Naive thymus-derived CD4-positive, alpha-beta T cell (primary cell): ENCODE measurements at regions of chr5 and their contacts with region 1.

Region 1: DNA sequence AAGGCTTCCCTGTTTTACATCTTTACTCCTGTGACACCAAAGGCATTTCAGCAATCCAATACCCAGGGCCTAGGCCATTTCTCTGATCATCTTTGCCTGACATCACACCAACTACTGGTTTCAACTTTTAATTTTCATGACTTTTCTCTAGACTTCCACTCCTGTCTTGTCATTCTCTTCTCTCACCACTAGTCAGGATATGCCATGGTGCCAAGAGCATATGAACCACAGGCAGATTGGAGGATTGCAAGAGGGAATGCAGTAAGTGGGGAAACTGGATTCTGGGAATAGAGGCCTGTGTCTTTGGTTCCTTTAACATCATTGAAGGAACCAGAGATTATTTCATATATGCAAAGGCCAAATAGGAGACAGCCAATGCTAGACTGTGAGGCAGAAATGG is 69.3 kb downstream of the ANKRD31 start:
- DNase-seq: peak in 1 of 9 donors; percentile 12
- ATAC-seq: no peak
- H3K4me3 ChIP-seq: no peak overlapping the region
- H3K4me3 Mint-ChIP-seq: no peak overlapping the region
- H3K27ac ChIP-seq: no peak overlapping the region
- H3K27ac Mint-ChIP-seq: no peak overlapping the region
- H3K4me1 ChIP-seq: no peaks in the 10 kb centered on the region
- H3K4me1 Mint-ChIP-seq: no peaks in the 10 kb centered on the region
- H3K27me3 ChIP-seq: no peaks in the 10 kb centered on the region
- H3K27me3 Mint-ChIP-seq: no peaks in the 10 kb centered on the region

Region 2: DNA sequence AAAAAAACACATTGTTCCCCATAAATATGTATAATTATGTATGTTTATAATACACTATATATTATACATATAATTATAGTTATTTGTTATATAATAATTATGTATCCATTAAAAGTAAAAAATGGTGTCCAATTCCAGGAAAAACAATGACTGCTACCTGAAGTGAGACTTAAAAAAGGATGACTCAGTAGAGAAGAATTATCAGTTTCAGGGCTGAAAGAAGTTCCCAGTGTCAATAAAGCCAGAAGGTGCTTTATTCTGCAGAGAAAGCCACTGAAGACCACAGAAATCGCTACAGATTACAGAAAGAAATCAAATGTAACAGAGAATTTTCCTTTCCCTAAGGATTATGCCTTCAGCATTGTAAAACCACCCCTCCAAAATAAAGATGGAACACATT is 18.4 kb after region 1 on chr5:
- CTCF ChIA-PET with region 1: no interaction called
- POLR2A ChIA-PET with region 1: no interaction called
- intact Hi-C with region 1: loop called in 1 of 2 experiments (anchors 2 kb)
- DNase-seq: no peak
- ATAC-seq: no peak
- H3K4me3 ChIP-seq: no peak overlapping the region
- H3K4me3 Mint-ChIP-seq: no peak overlapping the region
- H3K27ac ChIP-seq: no peak overlapping the region
- H3K27ac Mint-ChIP-seq: no peak overlapping the region
- H3K4me1 ChIP-seq: no peaks in the 10 kb centered on the region
- H3K4me1 Mint-ChIP-seq: peaks cover 0 to 9% (median 6%) of the 10 kb centered on the region in 7 donors
- H3K27me3 ChIP-seq: no peaks in the 10 kb centered on the region
- H3K27me3 Mint-ChIP-seq: no peaks in the 10 kb centered on the region

Region 3: GRCh38 chr5:75862872-75863271 is 695.5 kb after region 1 on chr5:
- CTCF ChIA-PET with region 1: no interaction called
- POLR2A ChIA-PET with region 1: no interaction called
- intact Hi-C with region 1: no loop called
- DNase-seq: no peak
- ATAC-seq: no peak
- H3K4me3 ChIP-seq: no peak overlapping the region
- H3K4me3 Mint-ChIP-seq: no peak overlapping the region
- H3K27ac ChIP-seq: no peak overlapping the region
- H3K27ac Mint-ChIP-seq: no peak overlapping the region
- H3K4me1 ChIP-seq: no peaks in the 10 kb centered on the region
- H3K4me1 Mint-ChIP-seq: no peaks in the 10 kb centered on the region
- H3K27me3 ChIP-seq: no peaks in the 10 kb centered on the region
- H3K27me3 Mint-ChIP-seq: peaks cover 8 to 46% (median 41%) of the 10 kb centered on the region in 5 donors